Heart left ventricle (tissue), 16 donors: ENCODE measurements at regions of chr10 and their contacts with region 1.

Region 1: DNA sequence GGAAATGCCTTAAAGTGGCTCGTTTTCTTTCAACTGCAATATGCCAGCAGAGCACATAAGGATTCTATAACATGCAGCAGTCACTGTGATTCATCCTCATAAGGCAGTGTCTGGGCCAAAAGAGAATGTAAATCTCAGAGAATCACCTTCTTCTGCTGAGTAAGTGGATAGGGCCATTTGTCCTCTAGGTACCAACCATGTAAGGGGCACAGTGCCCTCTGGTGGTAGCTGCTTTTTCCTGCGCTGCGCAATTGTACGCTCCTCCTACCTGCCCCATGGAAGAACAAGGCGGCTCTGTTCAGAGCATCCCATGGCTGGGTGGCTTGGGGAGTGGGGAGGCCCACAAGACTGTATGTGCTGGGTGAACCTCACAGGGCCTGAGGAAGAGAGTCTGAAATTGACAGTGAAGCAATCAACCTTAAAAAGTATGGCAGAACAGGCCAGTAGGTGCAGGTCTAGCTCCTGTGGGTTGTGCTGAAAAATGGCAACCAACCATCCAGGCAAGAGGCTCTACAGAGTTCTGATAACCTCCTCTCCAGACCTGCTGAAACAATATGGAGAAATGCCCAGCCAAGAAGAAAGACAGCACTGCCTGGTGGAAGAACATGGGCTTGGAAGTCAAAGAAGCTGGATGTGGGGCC is 78.6 kb upstream of the C10orf90 start:
- DNase-seq: peak; percentile 42 to 72 (median 62)
- ATAC-seq: peak; percentile 67 to 91 (median 80)
- H3K4me3 ChIP-seq: no peak overlapping the region
- H3K27ac ChIP-seq: no peak overlapping the region
- H3K4me1 ChIP-seq: no peaks in the 10 kb centered on the region
- H3K27me3 ChIP-seq: peaks cover 0 to 2% (median 0%) of the 10 kb centered on the region in 9 donors
- CTCF ChIP-seq: peak; percentile 59 to 78 (median 72)
- POLR2A ChIP-seq: no peak

Region 2: GRCh38 chr10:125929618-125930017 is 819.5 kb before region 1 on chr10:
- intact Hi-C with region 1: loop called in 1 of 10 experiments (anchors 5 kb)
- DNase-seq: no peak
- ATAC-seq: no peak
- H3K4me3 ChIP-seq: no peak overlapping the region
- H3K27ac ChIP-seq: no peak overlapping the region
- H3K4me1 ChIP-seq: peaks cover 0 to 6% (median 0%) of the 10 kb centered on the region in 12 donors
- H3K27me3 ChIP-seq: no peaks in the 10 kb centered on the region
- CTCF ChIP-seq: no peak
- POLR2A ChIP-seq: no peak